ENCODE measurements at regions of chr20 and their contacts with region 1.

Region 1: DNA sequence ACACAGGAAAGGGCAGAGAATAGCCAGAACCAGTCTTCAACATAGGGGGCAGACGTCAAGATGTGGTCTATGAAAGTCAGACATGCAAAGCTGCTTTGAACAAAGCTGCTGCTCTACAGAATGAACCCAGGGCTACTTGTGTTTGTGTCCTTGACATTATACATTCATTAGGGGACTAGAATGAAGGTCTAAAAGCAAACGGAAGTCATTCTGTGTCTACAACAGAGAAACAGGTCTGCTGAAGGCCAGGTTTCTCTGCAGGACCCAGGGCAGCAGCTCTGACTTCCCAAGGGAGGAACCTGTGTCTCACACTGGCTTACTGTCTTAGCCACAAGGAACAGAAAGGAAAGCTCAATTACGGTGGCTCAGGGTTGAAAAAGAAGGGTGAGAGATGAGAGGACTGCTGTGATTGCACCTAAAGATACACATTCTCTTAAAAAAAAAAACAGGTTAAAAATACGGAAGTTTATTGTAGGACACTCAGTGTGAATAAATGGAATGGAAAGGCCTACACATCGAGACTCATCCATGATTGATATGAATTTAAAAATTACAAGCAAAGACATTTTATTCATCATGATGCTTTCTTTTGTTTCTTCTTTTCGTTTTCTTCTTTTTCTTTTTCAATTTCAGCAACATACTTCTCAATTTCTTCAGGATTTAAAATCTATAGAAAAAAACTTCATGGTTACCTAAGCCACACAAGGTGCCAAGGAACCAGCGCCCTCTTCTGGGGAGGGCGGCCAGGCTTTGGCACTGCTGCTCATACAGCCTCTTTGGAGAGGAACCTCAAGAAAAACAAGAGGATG is 6.7 kb downstream of the PSMA7 start:
- DNase-seq: peak; percentile 67 to 83
- ATAC-seq: peak in 2 of 4 donors; percentile 33 to 34
- H3K4me3 ChIP-seq: no peak overlapping the region
- H3K27ac ChIP-seq: peak overlapping the region; percentile 67
- H3K4me1 ChIP-seq: peaks cover 42% of the 10 kb centered on the region
- H3K27me3 ChIP-seq: no peaks in the 10 kb centered on the region
- CTCF ChIP-seq: peak; percentile 74

Region 2: DNA sequence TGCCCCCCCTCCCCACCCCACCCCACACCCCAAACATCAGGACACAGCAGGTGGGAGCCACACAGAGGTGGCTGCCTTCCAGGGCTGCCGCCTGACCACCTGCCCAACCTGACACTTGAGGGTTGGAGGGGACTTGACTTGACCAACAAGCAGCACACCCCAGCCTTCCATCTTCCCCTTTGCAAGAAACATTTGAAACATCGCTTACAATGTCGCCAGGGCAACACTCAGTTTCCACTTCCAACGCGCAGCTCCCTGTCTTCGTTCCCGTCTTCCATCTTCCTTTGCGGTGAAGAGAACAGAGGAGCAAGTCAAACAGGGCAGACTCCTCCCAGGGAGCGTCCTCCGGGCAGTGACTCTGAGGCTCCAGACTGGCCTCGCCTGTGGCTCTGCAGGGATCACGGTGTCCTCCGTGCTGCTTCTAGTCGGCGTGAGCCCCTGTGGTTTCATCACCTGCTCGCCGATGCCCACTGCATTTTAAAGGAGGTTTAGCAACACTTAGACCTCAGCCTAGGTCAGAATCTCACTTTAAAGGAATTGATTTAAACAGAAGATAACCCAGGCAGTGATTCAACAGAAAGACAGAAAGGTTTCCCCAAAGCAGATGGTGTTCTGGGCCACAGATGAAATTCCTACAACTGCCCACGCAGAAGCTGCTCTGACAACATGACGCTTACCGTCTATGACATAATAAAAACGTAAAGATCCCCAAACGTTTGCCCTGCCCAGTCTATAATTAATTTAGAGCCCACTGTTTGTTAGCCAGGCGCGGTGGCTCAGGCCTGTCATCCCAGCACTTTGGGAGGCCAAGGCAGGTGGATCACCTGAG is 201.6 kb before region 1 on chr20:
- intact Hi-C with region 1: no loop called
- DNase-seq: peak in 1 of 2 donors; percentile 16
- ATAC-seq: no peak
- H3K4me3 ChIP-seq: no peak overlapping the region
- H3K27ac ChIP-seq: no peak overlapping the region
- H3K4me1 ChIP-seq: no peaks in the 10 kb centered on the region
- H3K27me3 ChIP-seq: no peaks in the 10 kb centered on the region
- CTCF ChIP-seq: no peak

Region 3: DNA sequence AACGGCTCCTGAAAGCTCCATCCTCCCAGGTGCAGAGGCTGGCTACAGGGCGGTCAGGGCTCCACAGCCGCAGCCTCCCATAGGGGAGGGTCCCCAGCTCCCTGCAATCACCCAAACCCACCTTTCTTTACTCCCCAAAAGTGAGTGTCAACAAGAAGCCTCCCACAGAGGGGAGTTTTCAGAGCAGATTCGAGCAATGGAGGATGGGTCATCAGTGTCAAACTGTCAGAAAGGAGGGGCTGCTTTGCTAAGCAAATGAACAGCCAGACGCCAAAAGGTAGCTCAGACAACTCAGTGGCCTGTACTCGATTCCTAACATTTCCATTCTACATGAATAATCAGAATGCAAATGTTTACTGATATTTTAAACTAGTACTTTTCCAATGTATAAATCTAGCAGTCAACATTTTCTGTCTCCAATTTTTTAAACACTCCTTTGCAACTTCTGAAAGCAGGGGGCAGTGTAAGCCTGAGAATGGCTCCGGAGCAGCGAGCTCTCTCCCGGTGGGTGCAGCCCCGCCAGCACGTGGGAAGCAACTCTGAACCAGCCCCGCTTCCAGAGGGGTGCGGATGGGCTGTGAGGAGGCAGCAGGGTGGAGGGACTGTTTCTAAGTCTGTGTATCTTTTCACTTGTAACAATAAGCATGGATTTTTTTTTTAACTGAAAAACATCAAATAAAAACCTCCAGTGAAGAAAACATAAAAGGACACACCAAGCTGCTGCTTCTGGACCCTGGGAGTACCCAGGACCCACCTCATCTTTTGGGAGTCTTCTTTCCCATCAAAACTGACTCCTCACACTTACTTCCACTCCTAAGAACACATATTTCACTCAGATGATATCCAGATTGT is 125.7 kb before region 1 on chr20:
- intact Hi-C with region 1: loop called in 1 of 2 experiments (anchors 5 kb)
- DNase-seq: peak in 1 of 2 donors; percentile 72
- ATAC-seq: peak; percentile 74 to 85 (median 75)
- H3K4me3 ChIP-seq: no peak overlapping the region
- H3K27ac ChIP-seq: no peak overlapping the region
- H3K4me1 ChIP-seq: no peaks in the 10 kb centered on the region
- H3K27me3 ChIP-seq: no peaks in the 10 kb centered on the region
- CTCF ChIP-seq: peak; percentile 59

Region 4: DNA sequence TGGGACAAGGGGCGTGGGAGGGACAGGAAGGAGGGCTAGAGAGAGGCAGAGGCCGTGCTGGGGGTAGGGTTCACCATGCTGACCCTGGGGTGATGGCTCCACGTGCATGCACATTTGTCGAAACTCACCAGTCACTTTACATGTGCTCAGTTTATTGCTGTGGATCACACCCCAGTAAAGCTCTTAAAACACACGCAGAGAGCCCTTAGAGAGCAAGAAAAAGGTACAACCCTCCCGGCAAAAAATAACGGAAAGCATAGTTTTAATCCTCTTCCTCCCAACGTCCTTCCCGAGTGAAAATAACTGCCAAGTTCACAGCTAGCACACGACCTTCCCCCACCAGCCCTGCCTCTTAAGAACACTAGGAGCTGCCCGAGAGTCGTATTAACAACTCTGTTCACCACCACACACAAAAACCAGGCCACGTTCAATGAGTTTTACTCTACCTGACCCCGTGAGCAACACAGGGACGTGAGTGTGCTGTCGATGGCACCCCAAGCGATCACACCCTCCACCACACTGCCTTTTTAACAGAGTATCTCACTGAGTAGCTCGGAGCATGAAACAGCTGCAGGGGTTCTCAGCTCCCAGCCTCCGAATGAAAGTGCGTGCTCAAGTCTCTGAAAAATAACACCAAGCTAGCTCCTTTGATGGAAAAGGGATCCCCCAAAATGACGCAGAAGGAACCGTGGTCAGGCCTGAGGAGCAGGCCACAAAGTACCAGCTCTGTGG is 110.5 kb before region 1 on chr20:
- intact Hi-C with region 1: loop called (anchors 5 kb)
- DNase-seq: peak in 1 of 2 donors; percentile 36
- ATAC-seq: peak; percentile 57 to 69 (median 58)
- H3K4me3 ChIP-seq: no peak overlapping the region
- H3K27ac ChIP-seq: peak overlapping the region; percentile 63
- H3K4me1 ChIP-seq: peaks cover 47% of the 10 kb centered on the region
- H3K27me3 ChIP-seq: no peaks in the 10 kb centered on the region
- CTCF ChIP-seq: peak; percentile 54

Region 5: GRCh38 chr20:62121776-62122631 is 14.5 kb before region 1 on chr20 and contains the start of gene LSM14B:
- intact Hi-C with region 1: loop called in 1 of 2 experiments (anchors 2 kb)
- DNase-seq: peak; percentile 98
- ATAC-seq: peak; percentile 82 to 89 (median 83)
- H3K4me3 ChIP-seq: peak within 1 kb of the TSS; percentile 81
- H3K27ac ChIP-seq: peak within 1 kb of the TSS; percentile 99
- H3K4me1 ChIP-seq: peaks cover 59% of the 10 kb centered on the region
- H3K27me3 ChIP-seq: no peaks in the 10 kb centered on the region
- CTCF ChIP-seq: no peak
- total RNA-seq, gene LSM14B: 52.4 to 67.0 (median 60.8) TPM

Region 6: GRCh38 chr20:62237801-62238571 is 101.5 kb after region 1 on chr20 and contains the start of gene OSBPL2:
- intact Hi-C with region 1: no loop called
- DNase-seq: peak; percentile 99 to 100
- ATAC-seq: peak; percentile 95 to 97 (median 96)
- H3K4me3 ChIP-seq: peak within 1 kb of the TSS; percentile 73
- H3K27ac ChIP-seq: peak within 1 kb of the TSS; percentile 90
- H3K4me1 ChIP-seq: peaks cover 58% of the 10 kb centered on the region
- H3K27me3 ChIP-seq: no peaks in the 10 kb centered on the region
- CTCF ChIP-seq: no peak
- total RNA-seq, gene OSBPL2: 19.8 to 30.9 (median 24.8) TPM